Breast epithelium (tissue), 4 donors: ENCODE measurements at regions of chr1 and their contacts with region 1.

Region 1: GRCh38 chr1:201430776-201431175 is 9.2 kb upstream of the TNNI1 start:
- DNase-seq: no peak
- H3K4me3 ChIP-seq: no peak overlapping the region
- H3K27ac ChIP-seq: no peak overlapping the region
- H3K4me1 ChIP-seq: no peaks in the 10 kb centered on the region
- H3K27me3 ChIP-seq: no peaks in the 10 kb centered on the region
- CTCF ChIP-seq: no peak
- POLR2A ChIP-seq: no peak

Region 2: GRCh38 chr1:201408176-201408833 is 22.5 kb before region 1 on chr1:
- intact Hi-C with region 1: no loop called
- DNase-seq: peak; percentile 76 to 84
- H3K4me3 ChIP-seq: no peak overlapping the region
- H3K27ac ChIP-seq: no peak overlapping the region
- H3K4me1 ChIP-seq: no peaks in the 10 kb centered on the region
- H3K27me3 ChIP-seq: no peaks in the 10 kb centered on the region
- CTCF ChIP-seq: peak; percentile 80 to 95 (median 88)
- POLR2A ChIP-seq: no peak

Region 3: DNA sequence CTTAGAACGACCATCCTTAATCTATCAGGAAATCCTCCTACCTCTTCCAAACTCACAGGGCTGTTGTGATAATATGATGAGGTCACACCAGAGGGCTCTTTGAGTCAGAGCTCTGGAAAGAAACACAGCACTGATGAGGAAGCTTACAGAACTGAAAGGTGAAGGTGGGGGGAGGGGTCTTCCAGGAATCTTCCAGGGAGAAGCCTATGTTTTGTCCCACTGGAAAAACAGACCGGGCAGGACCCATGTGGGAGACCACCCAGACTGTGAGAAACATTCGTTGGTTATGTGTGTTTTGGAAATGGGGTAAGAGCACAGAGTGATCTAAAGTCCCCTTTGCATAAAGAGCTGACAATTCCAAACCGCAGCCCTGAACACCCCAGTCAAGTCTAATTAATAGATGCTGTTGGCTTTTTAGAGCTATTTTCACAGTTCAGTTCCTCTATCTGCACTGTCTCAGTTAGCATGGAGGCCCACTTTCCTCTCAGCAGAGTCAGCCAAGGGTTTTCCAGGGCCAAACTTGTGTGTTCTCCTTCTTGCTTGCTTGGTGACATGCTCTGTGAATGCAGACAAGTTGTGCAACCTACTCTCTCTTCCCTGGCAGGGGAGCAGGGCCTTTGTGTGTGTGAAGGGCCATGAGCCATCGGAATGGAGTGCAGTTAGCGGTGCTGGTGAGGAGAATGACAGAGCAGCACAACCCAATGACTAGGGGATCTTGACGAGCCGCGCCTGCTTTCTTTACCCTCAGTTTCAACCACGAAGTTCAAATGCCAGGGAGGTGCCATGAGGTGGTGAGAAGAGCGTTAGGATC is 25.9 kb after region 1 on chr1:
- intact Hi-C with region 1: no loop called
- DNase-seq: peak; percentile 63 to 83
- H3K4me3 ChIP-seq: no peak overlapping the region
- H3K27ac ChIP-seq: peak overlapping the region; percentile 80 to 87
- H3K4me1 ChIP-seq: peaks cover 5 to 22% of the 10 kb centered on the region in 2 donors
- H3K27me3 ChIP-seq: no peaks in the 10 kb centered on the region
- CTCF ChIP-seq: no peak
- POLR2A ChIP-seq: no peak

Region 4: DNA sequence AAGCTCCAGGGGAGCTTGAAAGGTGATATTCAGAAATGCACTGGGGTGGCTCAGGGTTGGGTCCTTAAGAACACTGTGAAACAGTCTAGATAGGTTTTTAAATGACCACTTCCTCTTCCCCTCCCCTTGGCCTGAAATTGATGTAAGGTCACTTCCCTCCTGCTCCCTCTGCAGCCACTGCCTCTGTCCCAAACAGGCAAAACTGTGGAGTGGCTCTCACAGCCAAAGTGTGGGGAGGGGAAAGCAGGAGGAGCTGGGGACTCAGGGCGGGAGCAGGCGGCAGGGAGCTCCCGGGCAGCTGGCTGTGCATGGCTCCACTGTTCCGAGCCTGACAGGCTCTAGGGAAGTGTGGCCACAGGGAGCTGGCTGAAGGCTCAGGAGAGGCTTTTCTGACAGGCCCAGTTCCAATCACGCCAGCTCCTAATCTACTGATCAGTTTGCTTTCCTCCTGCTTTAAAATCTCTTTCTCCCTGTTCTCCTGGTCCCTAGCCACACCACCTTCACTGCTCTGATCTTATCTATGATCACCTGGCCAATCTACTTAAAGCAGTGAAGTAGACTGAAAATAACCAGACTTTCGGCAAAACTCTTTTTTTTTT is 81.3 kb after region 1 on chr1:
- intact Hi-C with region 1: loop called (anchors 5 kb)
- DNase-seq: peak in 1 of 2 donors; percentile 62
- H3K4me3 ChIP-seq: peak overlapping the region in 2 of 3 donors; percentile 4 to 42
- H3K27ac ChIP-seq: peak overlapping the region; percentile 90 to 97
- H3K4me1 ChIP-seq: peaks cover 7 to 30% of the 10 kb centered on the region in 2 donors
- H3K27me3 ChIP-seq: no peaks in the 10 kb centered on the region
- CTCF ChIP-seq: no peak
- POLR2A ChIP-seq: no peak

Region 5: GRCh38 chr1:202034683-202035462 is 604.1 kb after region 1 on chr1:
- intact Hi-C with region 1: no loop called
- DNase-seq: peak; percentile 83 to 91
- H3K4me3 ChIP-seq: no peak overlapping the region
- H3K27ac ChIP-seq: peak overlapping the region; percentile 86 to 93
- H3K4me1 ChIP-seq: peaks cover 0 to 5% of the 10 kb centered on the region in 2 donors
- H3K27me3 ChIP-seq: no peaks in the 10 kb centered on the region
- CTCF ChIP-seq: no peak
- POLR2A ChIP-seq: no peak